ENCODE measurements at regions of chr15 and their contacts with region 1.

Region 1: DNA sequence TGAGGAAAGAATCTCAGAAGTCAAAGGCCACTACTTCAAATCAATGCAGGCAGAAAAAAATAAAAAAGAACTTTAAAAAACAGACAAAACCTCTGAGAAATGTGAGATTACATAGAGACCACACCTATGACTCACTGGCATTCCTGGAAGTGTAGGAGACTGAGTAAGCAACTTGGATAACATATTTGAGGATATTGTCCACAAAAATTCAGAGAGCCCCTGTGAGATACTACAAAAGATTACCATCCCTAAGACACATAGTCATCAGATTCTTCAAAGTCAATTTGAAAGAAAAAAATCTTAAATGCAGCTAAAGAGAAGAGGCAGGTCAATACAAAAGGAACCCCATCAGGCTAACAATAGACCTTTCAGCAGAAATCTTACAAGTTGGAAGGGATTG is 887.3 kb downstream of the NTRK3 start:
- DNase-seq: peak; percentile 76
- H3K4me3 ChIP-seq: no peak overlapping the region
- H3K27ac ChIP-seq: peak overlapping the region; percentile 89
- H3K4me1 ChIP-seq: peaks cover 40% of the 10 kb centered on the region
- H3K27me3 ChIP-seq: no peaks in the 10 kb centered on the region
- CTCF ChIP-seq: no peak

Region 2: GRCh38 chr15:87207945-87208546 is 161.2 kb before region 1 on chr15:
- CTCF ChIA-PET with region 1: no interaction called
- dilution Hi-C with region 1: no loop called
- in situ Hi-C with region 1: no loop called
- intact Hi-C with region 1: loop called (anchors 1 kb)
- DNase-seq: peak; percentile 88
- H3K4me3 ChIP-seq: no peak overlapping the region
- H3K27ac ChIP-seq: peak overlapping the region; percentile 97
- H3K4me1 ChIP-seq: peaks cover 39% of the 10 kb centered on the region
- H3K27me3 ChIP-seq: no peaks in the 10 kb centered on the region
- CTCF ChIP-seq: no peak

Region 3: DNA sequence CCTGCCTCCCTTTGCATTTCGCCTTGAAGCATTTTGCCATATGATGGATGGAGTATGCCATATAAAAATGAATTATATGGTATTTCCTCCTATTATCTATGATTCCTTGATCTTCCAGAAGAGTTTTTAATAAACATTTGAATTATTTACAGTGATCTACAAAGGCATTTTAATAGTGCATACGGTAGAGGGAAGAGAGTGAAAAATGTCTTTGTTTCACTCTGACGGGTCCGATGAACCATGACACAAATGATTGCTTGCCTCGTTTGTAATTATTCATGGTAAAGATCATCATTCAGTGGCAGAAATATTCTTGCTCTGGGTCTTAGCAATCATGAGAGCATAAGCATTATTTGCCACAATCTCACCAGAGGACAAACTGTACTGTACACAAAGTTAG is 123.7 kb before region 1 on chr15:
- CTCF ChIA-PET with region 1: no interaction called
- dilution Hi-C with region 1: no loop called
- in situ Hi-C with region 1: no loop called
- intact Hi-C with region 1: no loop called
- DNase-seq: no peak
- H3K4me3 ChIP-seq: no peak overlapping the region
- H3K27ac ChIP-seq: no peak overlapping the region
- H3K4me1 ChIP-seq: no peaks in the 10 kb centered on the region
- H3K27me3 ChIP-seq: no peaks in the 10 kb centered on the region
- CTCF ChIP-seq: no peak

Region 4: DNA sequence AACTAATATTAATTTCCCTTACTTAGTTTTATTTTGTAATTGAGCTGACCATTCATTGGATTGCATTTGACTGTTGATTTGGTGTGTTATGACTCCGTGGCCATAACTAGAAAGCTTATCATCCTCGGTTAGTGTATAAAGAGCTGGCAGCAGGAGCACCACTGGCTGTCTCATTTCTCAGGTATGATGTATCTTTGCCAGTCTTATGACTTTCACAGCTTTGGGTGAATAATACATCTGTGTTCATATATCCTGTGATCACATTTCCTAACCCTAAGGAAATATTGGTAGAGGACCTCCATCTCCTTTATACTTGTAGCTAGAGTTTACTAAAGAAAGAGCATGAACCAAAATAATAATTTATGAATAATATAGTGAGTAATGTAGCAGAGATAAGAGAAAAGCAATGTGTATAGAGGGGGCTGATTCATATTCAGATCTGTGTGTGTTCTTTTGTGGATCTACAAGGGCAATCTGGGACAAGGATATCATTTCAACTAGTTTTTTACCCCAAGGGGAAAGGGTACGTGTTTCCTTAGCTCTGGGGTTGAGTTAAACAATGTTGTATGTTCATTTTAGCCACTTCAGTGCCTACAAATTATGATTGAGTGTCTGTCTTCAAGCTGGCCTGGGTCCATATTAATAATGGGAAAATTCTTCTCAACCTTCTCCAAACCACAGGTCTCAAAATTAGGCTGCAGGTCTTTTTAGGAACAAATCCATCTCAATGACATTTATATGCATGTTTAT is 14.4 kb before region 1 on chr15:
- CTCF ChIA-PET with region 1: no interaction called
- dilution Hi-C with region 1: no loop called
- in situ Hi-C with region 1: no loop called
- intact Hi-C with region 1: loop called (anchors 1 kb)
- DNase-seq: peak; percentile 91
- H3K4me3 ChIP-seq: no peak overlapping the region
- H3K27ac ChIP-seq: peak overlapping the region; percentile 90
- H3K4me1 ChIP-seq: peaks cover 14% of the 10 kb centered on the region
- H3K27me3 ChIP-seq: no peaks in the 10 kb centered on the region
- CTCF ChIP-seq: no peak

Region 5: DNA sequence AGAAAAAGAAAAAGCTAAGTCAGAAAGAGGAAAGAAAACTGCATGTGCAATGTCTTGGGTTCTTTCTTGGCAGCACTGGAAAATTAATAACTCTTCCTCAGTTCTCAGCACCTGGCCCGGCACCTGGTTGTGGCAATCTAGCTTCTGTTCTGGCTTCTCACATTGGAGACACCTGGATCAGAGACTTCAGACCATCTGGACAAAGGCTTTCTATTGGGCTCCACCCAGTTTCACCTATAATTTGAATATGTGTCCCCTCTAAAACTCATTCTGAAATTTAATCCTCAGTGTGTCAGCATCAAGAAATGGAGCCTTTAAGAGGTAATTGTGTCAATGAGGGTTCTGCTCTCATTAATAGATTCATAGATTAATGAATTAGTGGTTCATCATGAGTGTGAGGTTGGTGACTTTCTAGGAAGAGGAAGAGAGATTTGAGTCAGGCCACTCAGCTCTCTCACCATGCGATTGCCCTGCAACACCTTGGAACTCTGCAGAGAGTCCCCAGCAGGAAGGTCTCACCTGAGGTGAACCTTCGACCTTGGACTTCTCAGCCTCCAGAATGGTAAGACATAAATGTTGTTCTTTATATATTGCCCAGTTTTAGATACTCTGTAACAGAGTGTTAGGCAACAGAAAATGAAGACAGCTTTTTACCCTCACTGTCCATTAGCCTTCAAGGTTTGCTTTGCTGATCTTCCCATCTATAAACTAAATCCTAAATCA is 207.4 kb after region 1 on chr15:
- CTCF ChIA-PET with region 1: no interaction called
- dilution Hi-C with region 1: no loop called
- in situ Hi-C with region 1: no loop called
- intact Hi-C with region 1: loop called (anchors 5 kb)
- DNase-seq: peak; percentile 63
- H3K4me3 ChIP-seq: no peak overlapping the region
- H3K27ac ChIP-seq: peak overlapping the region; percentile 87
- H3K4me1 ChIP-seq: peaks cover 57% of the 10 kb centered on the region
- H3K27me3 ChIP-seq: no peaks in the 10 kb centered on the region
- CTCF ChIP-seq: no peak